Dorsolateral prefrontal cortex (tissue), 120 donors: ENCODE measurements at regions of chr13 and their contacts with region 1.

Region 1: DNA sequence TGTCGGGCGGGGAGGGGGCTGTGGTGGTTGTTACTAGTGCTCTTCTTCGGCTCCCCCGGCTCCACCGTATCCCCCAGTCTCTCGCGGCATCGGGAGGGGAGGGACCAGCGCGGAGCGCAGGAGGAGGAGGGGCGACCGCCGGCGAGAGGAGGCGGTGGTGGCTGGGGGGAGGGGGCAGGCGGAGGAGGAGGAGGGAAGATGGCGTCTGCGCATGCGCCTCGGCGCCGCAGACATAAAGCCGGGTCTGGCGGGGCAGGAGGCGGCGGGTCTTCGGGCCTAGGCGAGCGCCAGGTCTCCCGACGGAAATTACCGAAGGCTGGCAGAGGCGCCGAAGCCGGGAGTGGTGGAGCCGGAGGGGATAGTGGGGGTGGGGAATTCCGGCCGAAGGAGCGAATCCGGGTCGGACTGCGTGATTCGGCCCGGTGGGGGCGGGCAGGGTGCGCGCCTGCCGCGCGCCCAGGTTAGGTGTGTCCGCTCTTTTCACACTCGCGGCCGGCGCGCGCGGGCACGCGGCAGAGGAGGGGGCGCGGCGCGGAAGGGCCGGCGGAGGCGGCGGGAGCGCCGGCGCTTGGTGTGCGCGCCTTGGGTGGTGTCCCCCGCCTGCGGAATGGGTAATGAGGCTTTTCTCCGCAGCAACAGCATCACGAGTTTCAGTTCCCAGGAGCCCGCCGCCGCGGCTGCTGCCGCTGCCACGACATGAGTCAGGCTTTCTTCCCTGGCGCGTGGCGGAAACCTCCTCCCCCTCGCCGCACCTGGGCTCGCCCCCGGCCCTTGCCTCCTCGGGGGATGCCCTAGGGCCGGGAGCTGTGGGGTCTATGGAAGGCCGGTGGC is 1.3 kb upstream of the TSC22D1 start:
- DNase-seq: peak; percentile 85 to 97 (median 92)
- H3K4me3 ChIP-seq: peak overlapping the region; percentile 55 to 100 (median 89)
- H3K27ac ChIP-seq: peak overlapping the region; percentile 70 to 99 (median 97)
- H3K27me3 ChIP-seq: no peaks in the 10 kb centered on the region
- CTCF ChIP-seq: peak in 13 of 56 donors; percentile 6 to 38 (median 13)

Region 2: DNA sequence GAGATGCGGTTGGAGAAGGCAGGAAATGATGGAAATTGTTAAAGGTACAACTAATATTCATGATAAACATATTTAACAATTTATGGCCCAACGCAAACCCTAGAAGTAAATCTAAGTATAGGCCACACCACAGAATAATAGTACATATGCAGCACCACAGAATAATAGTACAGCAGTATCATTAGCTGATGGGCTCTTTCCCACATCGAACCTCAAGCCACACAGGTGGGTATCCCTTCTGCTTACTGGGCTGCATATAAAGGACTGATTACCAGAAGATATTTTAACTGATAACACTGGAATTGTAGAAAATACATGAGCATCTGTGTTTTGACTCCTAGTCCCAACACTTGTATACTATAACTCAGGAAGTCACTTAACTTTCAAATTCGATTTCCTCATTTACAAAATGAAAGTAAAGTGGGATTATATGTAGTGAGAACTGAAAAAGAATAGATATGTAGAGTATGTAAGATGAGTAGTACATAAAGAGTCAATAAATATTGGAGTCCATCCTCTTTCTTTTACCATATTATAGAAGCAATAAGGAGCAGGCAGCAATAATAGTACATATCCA is 92.8 kb before region 1 on chr13:
- intact Hi-C with region 1: loop called in 1 of 2 experiments (anchors 2 kb)
- DNase-seq: no peak
- H3K4me3 ChIP-seq: peak overlapping the region in 6 of 59 donors; percentile 2 to 28 (median 7)
- H3K27ac ChIP-seq: no peak overlapping the region
- H3K27me3 ChIP-seq: no peaks in the 10 kb centered on the region
- CTCF ChIP-seq: no peak

Region 3: GRCh38 chr13:44508562-44509077 is 68.8 kb before region 1 on chr13:
- intact Hi-C with region 1: no loop called
- DNase-seq: no peak
- H3K4me3 ChIP-seq: no peak overlapping the region
- H3K27ac ChIP-seq: no peak overlapping the region
- H3K27me3 ChIP-seq: no peaks in the 10 kb centered on the region
- CTCF ChIP-seq: no peak

Region 4: GRCh38 chr13:44637581-44637980 is 60.1 kb after region 1 on chr13:
- intact Hi-C with region 1: no loop called
- DNase-seq: no peak
- H3K4me3 ChIP-seq: no peak overlapping the region
- H3K27ac ChIP-seq: no peak overlapping the region
- H3K27me3 ChIP-seq: no peaks in the 10 kb centered on the region
- CTCF ChIP-seq: no peak

Region 5: DNA sequence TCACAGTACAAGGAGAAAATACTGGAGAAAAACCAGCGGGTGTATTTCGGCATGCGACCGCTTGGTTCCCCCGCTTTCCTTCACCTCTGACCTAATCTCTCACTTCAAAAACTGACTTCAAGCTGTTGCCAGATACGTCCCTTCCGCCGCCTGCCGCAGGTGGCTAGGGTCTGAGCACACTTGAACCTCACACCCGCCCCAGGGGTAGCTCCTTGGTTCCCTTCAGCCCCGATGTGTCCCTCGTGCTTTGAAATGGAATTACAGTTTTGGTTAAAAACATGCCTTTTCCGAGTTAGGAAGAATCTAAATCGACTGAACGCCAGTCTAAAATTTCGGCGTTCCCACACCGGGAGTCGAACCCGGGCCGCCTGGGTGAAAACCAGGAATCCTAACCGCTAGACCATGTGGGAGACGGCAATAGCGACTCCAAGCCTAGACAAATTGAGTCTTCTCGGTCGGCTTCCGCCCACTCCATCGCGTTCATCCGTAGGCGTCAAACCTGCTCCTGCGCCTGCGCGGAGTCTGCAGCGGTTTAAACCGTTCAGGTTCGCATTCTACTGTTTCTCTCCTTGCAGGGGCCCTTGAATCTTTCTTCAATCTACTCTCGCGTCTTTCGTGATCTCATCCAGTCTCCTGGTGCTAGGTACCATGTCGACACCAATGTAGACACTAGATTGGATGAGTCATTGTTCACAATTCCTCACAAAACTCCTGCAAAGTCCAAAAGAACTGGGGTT is 340.3 kb after region 1 on chr13:
- intact Hi-C with region 1: loop called (anchors 1 to 2 kb)
- DNase-seq: peak; percentile 90 to 97 (median 96)
- H3K4me3 ChIP-seq: peak overlapping the region; percentile 52 to 87 (median 68)
- H3K27ac ChIP-seq: peak overlapping the region; percentile 89 to 100 (median 99)
- H3K27me3 ChIP-seq: no peaks in the 10 kb centered on the region
- CTCF ChIP-seq: peak in 31 of 56 donors; percentile 10 to 61 (median 32)

Region 6: DNA sequence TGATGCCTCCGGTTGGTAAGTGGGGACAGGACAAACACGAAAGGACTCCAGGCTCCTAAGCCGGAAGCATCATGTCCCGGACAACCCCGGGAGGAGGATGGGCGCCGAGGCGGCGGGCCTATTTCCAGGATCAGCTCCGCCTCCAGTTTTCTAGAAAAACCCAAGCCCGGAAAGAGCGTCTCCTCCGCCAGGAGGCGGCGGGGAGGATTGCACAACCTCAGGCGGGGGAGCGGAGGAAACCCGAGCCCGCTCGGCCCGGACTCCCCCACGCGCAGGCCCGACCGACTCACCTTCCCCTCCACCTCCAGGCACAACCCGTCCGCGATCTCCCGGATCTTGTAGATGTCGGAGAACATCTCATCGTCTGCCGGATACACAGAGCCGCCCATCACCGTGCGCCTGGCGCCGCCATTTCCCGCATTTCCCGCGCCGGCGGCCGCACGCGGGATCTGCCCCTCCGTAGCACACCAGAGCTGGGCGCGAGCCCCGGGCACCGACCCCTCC is 763.0 kb after region 1 on chr13:
- intact Hi-C with region 1: loop called in 1 of 2 experiments (anchors 5 kb)
- DNase-seq: peak; percentile 72 to 90 (median 85)
- H3K4me3 ChIP-seq: peak overlapping the region; percentile 58 to 100 (median 95)
- H3K27ac ChIP-seq: peak overlapping the region; percentile 92 to 100 (median 100)
- H3K27me3 ChIP-seq: no peaks in the 10 kb centered on the region
- CTCF ChIP-seq: peak in 54 of 56 donors; percentile 26 to 69 (median 51)